ENCODE measurements at regions of chr11 and their contacts with region 1.

Region 1: GRCh38 chr11:56624661-56625110 is 10.0 kb upstream of the OR5M1 start:
- DNase-seq: no peak
- ATAC-seq: no peak
- H3K4me3 ChIP-seq: no peak overlapping the region
- H3K4me3 Mint-ChIP-seq: no peak overlapping the region
- H3K27ac ChIP-seq: no peak overlapping the region
- H3K27ac Mint-ChIP-seq: no peak overlapping the region
- H3K4me1 ChIP-seq: no peaks in the 10 kb centered on the region
- H3K4me1 Mint-ChIP-seq: no peaks in the 10 kb centered on the region
- H3K27me3 ChIP-seq: no peaks in the 10 kb centered on the region
- H3K27me3 Mint-ChIP-seq: no peaks in the 10 kb centered on the region

Region 2: DNA sequence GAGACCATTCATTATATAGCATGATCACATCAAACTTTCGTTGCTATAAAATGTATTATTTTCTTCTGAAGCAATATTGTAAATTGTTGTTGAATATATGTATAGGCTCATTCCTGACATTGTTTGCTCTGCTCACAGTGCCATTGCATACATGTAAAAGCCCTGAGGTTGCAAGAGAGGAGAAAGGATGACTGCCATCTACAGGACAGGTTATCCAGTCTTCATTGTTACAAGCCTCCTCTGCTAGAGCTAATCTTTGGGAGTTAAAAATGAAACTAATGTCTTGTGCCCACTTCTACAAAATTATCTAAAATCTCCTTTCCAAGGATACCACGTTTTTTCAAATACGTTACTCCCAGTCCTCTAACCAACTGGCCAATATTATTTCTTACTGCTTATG is 228.6 kb before region 1 on chr11:
- CTCF ChIA-PET with region 1: no interaction called
- POLR2A ChIA-PET with region 1: no interaction called
- intact Hi-C with region 1: no loop called
- DNase-seq: no peak
- ATAC-seq: no peak
- H3K4me3 ChIP-seq: no peak overlapping the region
- H3K4me3 Mint-ChIP-seq: no peak overlapping the region
- H3K27ac ChIP-seq: no peak overlapping the region
- H3K27ac Mint-ChIP-seq: no peak overlapping the region
- H3K4me1 ChIP-seq: no peaks in the 10 kb centered on the region
- H3K4me1 Mint-ChIP-seq: no peaks in the 10 kb centered on the region
- H3K27me3 ChIP-seq: no peaks in the 10 kb centered on the region
- H3K27me3 Mint-ChIP-seq: no peaks in the 10 kb centered on the region

Region 3: DNA sequence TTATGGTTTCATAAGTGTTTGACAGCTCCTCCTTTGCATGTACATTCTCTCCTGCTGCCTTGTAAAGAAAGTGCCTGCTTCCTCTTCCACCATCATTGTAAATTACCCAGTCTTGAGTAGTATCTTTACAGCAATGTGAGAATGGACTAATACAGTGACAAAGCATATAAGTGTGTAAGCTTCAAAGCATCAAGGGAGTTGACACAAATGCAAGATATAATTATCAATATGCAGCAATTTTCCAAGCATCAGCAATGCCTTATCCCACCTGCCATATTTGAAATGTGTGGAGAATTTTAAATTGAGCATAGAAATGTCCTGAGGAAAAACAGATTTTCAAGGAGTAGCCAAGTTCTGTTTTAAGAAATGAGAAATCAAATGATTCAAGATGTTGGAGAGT is 213.9 kb before region 1 on chr11:
- CTCF ChIA-PET with region 1: no interaction called
- POLR2A ChIA-PET with region 1: no interaction called
- intact Hi-C with region 1: no loop called
- DNase-seq: no peak
- ATAC-seq: no peak
- H3K4me3 ChIP-seq: no peak overlapping the region
- H3K4me3 Mint-ChIP-seq: no peak overlapping the region
- H3K27ac ChIP-seq: no peak overlapping the region
- H3K27ac Mint-ChIP-seq: no peak overlapping the region
- H3K4me1 ChIP-seq: no peaks in the 10 kb centered on the region
- H3K4me1 Mint-ChIP-seq: no peaks in the 10 kb centered on the region
- H3K27me3 ChIP-seq: no peaks in the 10 kb centered on the region
- H3K27me3 Mint-ChIP-seq: no peaks in the 10 kb centered on the region

Region 4: DNA sequence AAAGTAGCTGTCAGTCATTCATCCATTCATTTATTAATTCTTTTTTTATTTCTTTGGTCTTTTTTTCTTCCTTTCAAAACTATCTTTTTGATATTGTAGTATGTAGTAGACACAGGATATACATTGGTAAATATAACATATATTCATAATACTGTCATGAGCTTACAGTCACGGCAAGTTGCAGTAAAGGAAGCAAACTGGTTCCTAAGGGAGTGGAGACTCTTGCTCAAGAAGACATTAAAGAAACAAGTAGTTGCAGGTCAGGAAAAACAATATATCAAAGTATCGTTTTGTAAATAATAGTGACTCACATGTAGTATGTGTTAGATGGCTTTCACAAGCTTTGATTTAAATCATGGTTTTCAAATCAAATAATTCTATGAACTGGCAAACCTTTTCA is 46.3 kb after region 1 on chr11:
- CTCF ChIA-PET with region 1: no interaction called
- POLR2A ChIA-PET with region 1: no interaction called
- intact Hi-C with region 1: no loop called
- DNase-seq: no peak
- ATAC-seq: no peak
- H3K4me3 ChIP-seq: no peak overlapping the region
- H3K4me3 Mint-ChIP-seq: no peak overlapping the region
- H3K27ac ChIP-seq: no peak overlapping the region
- H3K27ac Mint-ChIP-seq: no peak overlapping the region
- H3K4me1 ChIP-seq: no peaks in the 10 kb centered on the region
- H3K4me1 Mint-ChIP-seq: no peaks in the 10 kb centered on the region
- H3K27me3 ChIP-seq: no peaks in the 10 kb centered on the region
- H3K27me3 Mint-ChIP-seq: no peaks in the 10 kb centered on the region

Region 5: GRCh38 chr11:56740107-56740506 is 115.4 kb after region 1 on chr11:
- CTCF ChIA-PET with region 1: no interaction called
- POLR2A ChIA-PET with region 1: no interaction called
- intact Hi-C with region 1: loop called in 1 of 2 experiments (anchors 10 kb)
- DNase-seq: no peak
- ATAC-seq: no peak
- H3K4me3 ChIP-seq: no peak overlapping the region
- H3K4me3 Mint-ChIP-seq: no peak overlapping the region
- H3K27ac ChIP-seq: no peak overlapping the region
- H3K27ac Mint-ChIP-seq: no peak overlapping the region
- H3K4me1 ChIP-seq: no peaks in the 10 kb centered on the region
- H3K4me1 Mint-ChIP-seq: no peaks in the 10 kb centered on the region
- H3K27me3 ChIP-seq: no peaks in the 10 kb centered on the region
- H3K27me3 Mint-ChIP-seq: peaks cover 0 to 5% (median 0%) of the 10 kb centered on the region in 5 donors

Region 6: DNA sequence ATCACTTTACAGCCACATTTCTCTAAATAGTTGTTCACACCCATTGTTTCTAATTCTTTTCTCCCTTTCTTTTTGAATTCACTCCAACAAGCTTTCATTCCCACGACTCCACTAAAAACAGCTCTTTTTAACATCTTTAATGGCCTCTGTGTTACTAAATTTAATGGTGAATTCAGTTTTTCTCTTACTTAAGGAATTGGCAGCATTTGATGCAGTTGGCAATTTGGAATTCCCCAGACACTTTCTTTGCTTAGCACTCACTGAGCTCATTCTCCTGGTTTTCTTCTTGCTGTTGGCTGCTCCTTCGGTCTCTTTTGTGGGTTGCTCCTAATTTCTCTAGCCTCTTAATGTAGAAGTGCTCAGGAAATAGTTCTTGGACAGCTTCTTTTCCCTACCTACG is 1358.5 kb after region 1 on chr11:
- CTCF ChIA-PET with region 1: no interaction called
- POLR2A ChIA-PET with region 1: no interaction called
- intact Hi-C with region 1: no loop called
- DNase-seq: no peak
- ATAC-seq: no peak
- H3K4me3 ChIP-seq: no peak overlapping the region
- H3K4me3 Mint-ChIP-seq: no peak overlapping the region
- H3K27ac ChIP-seq: no peak overlapping the region
- H3K27ac Mint-ChIP-seq: no peak overlapping the region
- H3K4me1 ChIP-seq: no peaks in the 10 kb centered on the region
- H3K4me1 Mint-ChIP-seq: no peaks in the 10 kb centered on the region
- H3K27me3 ChIP-seq: no peaks in the 10 kb centered on the region
- H3K27me3 Mint-ChIP-seq: peaks cover 3 to 25% (median 10%) of the 10 kb centered on the region in 5 donors